Activated CD4-positive, alpha-beta T cell treated with anti-CD3 and anti-CD28 coated beads for 36 hours (primary cell): ENCODE measurements at regions of chr18 and their contacts with region 1.

Region 1: DNA sequence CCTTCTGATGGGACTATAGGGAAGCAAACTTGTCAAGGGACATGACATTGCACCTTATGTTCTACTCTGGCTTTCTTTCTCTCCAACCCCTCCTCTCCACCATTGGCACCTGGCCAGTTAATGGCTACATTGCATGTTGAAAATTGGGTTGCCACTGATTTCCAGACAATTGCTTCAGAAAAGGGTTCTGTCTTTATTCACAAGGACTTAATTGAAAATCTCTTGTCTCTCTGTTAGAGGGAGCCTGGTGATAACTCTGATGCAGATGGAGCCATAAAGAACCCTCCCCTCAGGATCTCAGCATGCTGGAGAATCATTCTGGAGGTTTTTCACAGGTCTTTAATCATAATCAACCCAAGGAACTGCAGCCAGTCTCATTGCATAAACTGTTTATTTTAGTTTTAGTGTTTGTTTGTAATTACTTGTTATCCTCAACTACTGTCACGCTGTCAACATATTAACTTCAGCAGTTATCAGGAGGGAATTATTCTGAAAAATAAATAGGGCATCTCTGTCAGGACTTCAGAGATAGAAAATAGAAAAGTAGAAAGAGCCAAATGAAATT is 316.8 kb downstream of the RIT2 start:
- DNase-seq: no peak
- ATAC-seq: no peak
- H3K4me3 Mint-ChIP-seq: no peak overlapping the region
- H3K27ac Mint-ChIP-seq: no peak overlapping the region
- H3K4me1 Mint-ChIP-seq: no peaks in the 10 kb centered on the region
- H3K27me3 Mint-ChIP-seq: no peaks in the 10 kb centered on the region

Region 2: GRCh38 chr18:42758852-42759251 is 39.8 kb before region 1 on chr18:
- CTCF ChIA-PET with region 1: no interaction called
- POLR2A ChIA-PET with region 1: no interaction called
- intact Hi-C with region 1: no loop called
- DNase-seq: no peak
- ATAC-seq: no peak
- H3K4me3 Mint-ChIP-seq: no peak overlapping the region
- H3K27ac Mint-ChIP-seq: no peak overlapping the region
- H3K4me1 Mint-ChIP-seq: no peaks in the 10 kb centered on the region
- H3K27me3 Mint-ChIP-seq: no peaks in the 10 kb centered on the region

Region 3: GRCh38 chr18:42850174-42851083 is 51.7 kb after region 1 on chr18:
- CTCF ChIA-PET with region 1: no interaction called
- POLR2A ChIA-PET with region 1: no interaction called
- intact Hi-C with region 1: loop called in 1 of 2 experiments (anchors 10 kb)
- DNase-seq: no peak
- ATAC-seq: no peak
- H3K4me3 Mint-ChIP-seq: no peak overlapping the region
- H3K27ac Mint-ChIP-seq: no peak overlapping the region
- H3K4me1 Mint-ChIP-seq: no peaks in the 10 kb centered on the region
- H3K27me3 Mint-ChIP-seq: no peaks in the 10 kb centered on the region

Region 4: DNA sequence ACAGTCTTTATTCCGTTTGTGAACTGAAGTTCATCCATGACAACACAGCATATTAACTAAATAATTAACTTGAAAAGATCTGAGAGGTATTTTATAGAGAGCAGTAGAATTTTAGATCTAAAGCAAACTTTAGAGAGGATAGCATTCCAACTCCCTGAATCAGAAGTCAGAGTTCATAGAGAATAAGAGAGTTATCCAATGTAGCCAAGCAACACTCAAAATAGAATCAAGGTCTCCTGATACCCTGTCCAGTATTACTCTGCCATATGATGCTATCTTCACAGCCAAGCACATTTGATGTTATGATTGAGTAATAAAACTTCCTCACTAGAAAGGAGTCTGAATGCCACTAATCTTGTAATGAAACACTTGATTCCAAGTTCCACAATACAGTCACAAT is 261.3 kb after region 1 on chr18:
- CTCF ChIA-PET with region 1: no interaction called
- POLR2A ChIA-PET with region 1: no interaction called
- intact Hi-C with region 1: no loop called
- DNase-seq: no peak
- ATAC-seq: no peak
- H3K4me3 Mint-ChIP-seq: no peak overlapping the region
- H3K27ac Mint-ChIP-seq: no peak overlapping the region
- H3K4me1 Mint-ChIP-seq: no peaks in the 10 kb centered on the region
- H3K27me3 Mint-ChIP-seq: no peaks in the 10 kb centered on the region